Left cardiac atrium (tissue), 4 donors: ENCODE measurements at regions of chr12 and their contacts with region 1.

Region 1: DNA sequence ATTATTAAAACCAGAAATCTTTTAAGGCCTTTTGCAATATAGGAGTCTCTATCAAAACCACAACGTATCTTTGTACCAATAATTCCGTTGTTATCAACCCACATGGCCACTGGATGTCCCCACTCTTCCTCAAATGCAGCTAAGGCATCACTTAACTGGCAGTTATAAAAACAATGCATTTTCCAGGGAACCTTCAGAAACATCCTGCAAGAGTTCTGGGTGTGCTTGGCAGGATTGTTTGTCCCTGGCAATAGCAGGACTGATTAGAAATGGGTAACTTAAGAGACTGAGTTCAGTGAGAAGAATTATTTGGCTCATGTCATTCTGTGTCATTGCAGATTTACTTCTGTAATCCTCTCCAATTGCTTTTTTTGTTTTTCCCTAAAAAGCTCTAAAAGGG is 112.0 kb downstream of the SLC15A5 start:
- DNase-seq: peak; percentile 38
- ATAC-seq: peak; percentile 64 to 75

Region 2: GRCh38 chr12:16359512-16360491 is 194.3 kb after region 1 on chr12:
- intact Hi-C with region 1: loop called in 1 of 2 experiments (anchors 10 kb)
- DNase-seq: peak; percentile 67
- ATAC-seq: peak; percentile 55 to 59